GM12878 (cell line): ENCODE measurements at regions of chr10 and their contacts with region 1.

Region 1: GRCh38 chr10:82914655-82915136 is 1039.7 kb downstream of the NRG3 start:
- DNase-seq: peak; percentile 55
- ATAC-seq: peak; percentile 94
- H3K4me3 ChIP-seq: no peak overlapping the region
- H3K27ac ChIP-seq: no peak overlapping the region
- H3K4me1 ChIP-seq: no peaks in the 10 kb centered on the region
- H3K27me3 ChIP-seq: no peaks in the 10 kb centered on the region
- CTCF ChIP-seq: no peak
- EP300 ChIP-seq: no peak
- POLR2A ChIP-seq: no peak
- RAD21 ChIP-seq: peak; percentile 10; the same call in 1 of the 2 replicates

Region 2: GRCh38 chr10:82934429-82934828 is 19.7 kb after region 1 on chr10:
- CTCF ChIA-PET with region 1: interaction called, 4 read pairs
- POLR2A ChIA-PET with region 1: interaction called, 4 read pairs
- RAD21 ChIA-PET with region 1: interaction called, 15 read pairs
- SMC1A ChIA-PET with region 1: interaction called, 7 read pairs
- in situ Hi-C with region 1: no loop called
- intact Hi-C with region 1: no loop called
- DNase-seq: no peak
- ATAC-seq: peak; percentile 90
- H3K4me3 ChIP-seq: no peak overlapping the region
- H3K27ac ChIP-seq: no peak overlapping the region
- H3K4me1 ChIP-seq: no peaks in the 10 kb centered on the region
- H3K27me3 ChIP-seq: no peaks in the 10 kb centered on the region
- CTCF ChIP-seq: peak; percentile 19 to 31 (median 28); a peak in 4 of 6 replicates
- EP300 ChIP-seq: no peak
- POLR2A ChIP-seq: no peak
- RAD21 ChIP-seq: peak; percentile 48; the same call in 1 of the 2 replicates

Region 3: DNA sequence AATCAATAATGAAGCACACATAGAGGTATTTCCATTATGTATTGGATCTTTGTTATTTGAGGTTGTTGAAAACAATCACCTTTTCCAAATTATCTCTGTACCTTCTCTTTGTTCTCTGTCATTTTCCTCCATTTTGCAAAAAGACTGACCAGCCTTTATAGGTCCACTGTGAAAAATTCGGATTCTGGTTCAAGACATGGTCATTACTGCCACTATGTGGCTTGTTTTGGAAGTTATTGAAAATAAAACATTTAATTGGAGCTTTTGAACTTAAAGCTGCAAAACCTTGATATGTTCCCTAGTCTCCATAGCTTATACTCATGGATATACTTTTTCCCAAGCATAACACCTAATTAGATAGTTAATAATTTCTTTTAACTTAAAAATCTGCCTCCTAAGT is 54.7 kb after region 1 on chr10:
- CTCF ChIA-PET with region 1: interaction called, 12 read pairs
- POLR2A ChIA-PET with region 1: no interaction called
- RAD21 ChIA-PET with region 1: interaction called, 24 read pairs
- SMC1A ChIA-PET with region 1: interaction called, 5 read pairs
- in situ Hi-C with region 1: no loop called
- intact Hi-C with region 1: loop called (anchors 1 kb)
- DNase-seq: no peak
- ATAC-seq: peak; percentile 66
- H3K4me3 ChIP-seq: no peak overlapping the region
- H3K27ac ChIP-seq: no peak overlapping the region
- H3K4me1 ChIP-seq: no peaks in the 10 kb centered on the region
- H3K27me3 ChIP-seq: no peaks in the 10 kb centered on the region
- CTCF ChIP-seq: peak in 2 of 3 experiments; percentile 18 to 55; a peak in 3 of 6 replicates
- EP300 ChIP-seq: no peak
- POLR2A ChIP-seq: no peak
- RAD21 ChIP-seq: peak; percentile 90